GM12878 (cell line): ENCODE measurements at regions of chr1 and their contacts with region 1.

Region 1: DNA sequence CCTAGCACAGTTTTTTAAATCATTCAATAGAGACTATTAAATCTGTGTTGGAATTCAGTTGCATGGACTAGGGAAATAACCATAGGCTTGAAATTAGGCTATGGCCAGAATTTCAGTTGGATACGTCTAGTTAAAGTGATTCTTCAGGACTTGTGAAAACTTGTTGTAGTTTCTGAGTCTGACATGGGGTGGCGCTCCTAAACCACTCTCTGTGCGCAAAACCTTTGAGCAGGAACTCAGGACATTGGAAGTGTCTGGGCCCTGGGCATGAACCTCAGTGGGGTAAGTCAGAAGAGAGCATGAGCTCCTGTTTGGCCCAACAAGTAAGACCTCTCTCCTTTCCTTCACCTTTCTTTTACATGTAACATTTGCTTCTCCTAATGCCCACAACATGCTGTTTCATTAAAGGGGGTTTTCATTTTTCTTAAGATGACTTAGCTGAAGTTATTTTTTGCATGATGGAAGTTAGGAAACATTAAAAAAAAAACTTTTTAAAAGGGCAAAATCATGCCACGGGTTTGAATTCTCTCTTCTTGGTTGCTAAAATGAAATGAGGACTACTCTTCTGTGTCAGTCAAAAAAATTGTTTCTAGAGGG is 17.1 kb upstream of the CCDC190 start:
- DNase-seq: no peak
- ATAC-seq: peak; percentile 60
- H3K4me3 ChIP-seq: no peak overlapping the region
- H3K27ac ChIP-seq: no peak overlapping the region
- H3K4me1 ChIP-seq: no peaks in the 10 kb centered on the region
- H3K27me3 ChIP-seq: peaks cover 0 to 2% of the 10 kb centered on the region in 2 experiments; a peak in 2 of 4 replicates
- CTCF ChIP-seq: peak; percentile 54 to 59 (median 58); a peak in 5 of 6 replicates
- EP300 ChIP-seq: no peak
- POLR2A ChIP-seq: no peak
- RAD21 ChIP-seq: peak; percentile 70

Region 2: DNA sequence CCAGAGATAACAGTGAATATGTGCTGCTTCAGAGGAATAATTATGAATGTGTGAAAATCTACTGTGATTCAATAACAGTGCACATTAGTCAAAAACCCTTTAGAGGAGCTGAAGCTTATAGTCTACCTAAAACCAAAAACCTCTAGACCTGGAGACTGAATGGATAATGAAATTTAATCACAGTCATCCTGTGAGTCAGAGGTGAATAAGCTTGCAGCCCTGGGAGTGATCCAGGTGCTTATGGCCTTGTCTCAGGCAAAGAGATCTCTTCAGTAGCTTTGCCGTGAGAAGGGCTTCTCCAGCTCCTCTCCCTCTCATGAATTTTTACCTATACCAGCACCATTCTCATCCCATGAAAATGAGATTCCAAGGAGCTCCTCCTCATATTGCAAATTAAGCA is 109.8 kb after region 1 on chr1:
- CTCF ChIA-PET with region 1: no interaction called
- POLR2A ChIA-PET with region 1: no interaction called
- RAD21 ChIA-PET with region 1: no interaction called
- SMC1A ChIA-PET with region 1: no interaction called
- in situ Hi-C with region 1: loop called (anchors 25 kb)
- intact Hi-C with region 1: no loop called
- DNase-seq: no peak
- ATAC-seq: no peak
- H3K4me3 ChIP-seq: no peak overlapping the region
- H3K27ac ChIP-seq: no peak overlapping the region
- H3K4me1 ChIP-seq: no peaks in the 10 kb centered on the region
- H3K27me3 ChIP-seq: no peaks in the 10 kb centered on the region; a peak in 1 of 4 replicates
- CTCF ChIP-seq: no peak
- EP300 ChIP-seq: no peak
- POLR2A ChIP-seq: no peak
- RAD21 ChIP-seq: no peak

Region 3: GRCh38 chr1:163130225-163130856 is 252.2 kb after region 1 on chr1:
- CTCF ChIA-PET with region 1: no interaction called
- POLR2A ChIA-PET with region 1: no interaction called
- RAD21 ChIA-PET with region 1: no interaction called
- SMC1A ChIA-PET with region 1: no interaction called
- in situ Hi-C with region 1: no loop called
- intact Hi-C with region 1: no loop called
- DNase-seq: no peak
- ATAC-seq: no peak
- H3K4me3 ChIP-seq: no peak overlapping the region
- H3K27ac ChIP-seq: no peak overlapping the region
- H3K4me1 ChIP-seq: no peaks in the 10 kb centered on the region
- H3K27me3 ChIP-seq: peaks cover 0 to 6% of the 10 kb centered on the region in 2 experiments; a peak in 2 of 4 replicates
- CTCF ChIP-seq: no peak
- EP300 ChIP-seq: no peak
- POLR2A ChIP-seq: no peak
- RAD21 ChIP-seq: no peak